ENCODE measurements at regions of chr14 and their contacts with region 1.

Region 1: DNA sequence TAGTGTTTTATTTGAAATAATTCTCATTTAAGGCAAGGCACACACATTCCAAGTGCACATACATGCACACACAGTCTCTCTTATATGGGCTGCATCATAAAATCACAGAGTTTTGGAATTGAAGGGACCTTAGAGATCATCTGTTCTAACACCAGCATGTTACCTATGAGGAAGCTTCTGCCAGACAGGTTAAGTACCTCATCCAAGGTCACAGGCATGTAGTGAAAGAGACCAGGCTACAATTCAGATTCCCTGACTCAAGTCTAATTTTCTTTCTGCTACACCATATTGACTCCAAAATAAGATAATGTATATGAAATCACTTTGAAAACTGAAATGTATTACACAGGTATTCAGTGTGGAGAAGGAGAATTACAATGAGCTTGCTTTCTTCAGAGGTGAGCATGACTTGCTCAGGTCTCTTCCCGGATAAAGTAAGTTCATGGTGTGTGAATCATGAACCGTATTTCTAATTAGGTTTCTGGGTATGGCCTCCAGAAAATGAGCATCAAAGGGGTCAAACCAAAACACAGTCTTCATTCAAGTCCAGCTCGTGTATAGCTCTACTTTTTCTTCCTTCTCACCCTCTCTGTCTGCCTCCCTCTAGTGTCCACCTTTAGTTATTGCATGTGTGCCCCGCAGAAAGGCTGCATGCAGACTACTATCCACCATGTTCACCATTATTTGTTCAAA is 411.9 kb downstream of the FUT8 start:
- DNase-seq: no peak
- H3K4me3 ChIP-seq: no peak overlapping the region
- H3K27ac ChIP-seq: no peak overlapping the region
- H3K4me1 ChIP-seq: peaks cover 0 to 15% (median 8%) of the 10 kb centered on the region in 4 experiments; a peak in 6 of 7 replicates
- H3K27me3 ChIP-seq: no peaks in the 10 kb centered on the region; a peak in 1 of 7 replicates
- CTCF ChIP-seq: peak; percentile 38 to 89 (median 74)
- EP300 ChIP-seq: no peak
- POLR2A ChIP-seq: no peak
- RAD21 ChIP-seq: peak; percentile 79 to 86

Region 2: DNA sequence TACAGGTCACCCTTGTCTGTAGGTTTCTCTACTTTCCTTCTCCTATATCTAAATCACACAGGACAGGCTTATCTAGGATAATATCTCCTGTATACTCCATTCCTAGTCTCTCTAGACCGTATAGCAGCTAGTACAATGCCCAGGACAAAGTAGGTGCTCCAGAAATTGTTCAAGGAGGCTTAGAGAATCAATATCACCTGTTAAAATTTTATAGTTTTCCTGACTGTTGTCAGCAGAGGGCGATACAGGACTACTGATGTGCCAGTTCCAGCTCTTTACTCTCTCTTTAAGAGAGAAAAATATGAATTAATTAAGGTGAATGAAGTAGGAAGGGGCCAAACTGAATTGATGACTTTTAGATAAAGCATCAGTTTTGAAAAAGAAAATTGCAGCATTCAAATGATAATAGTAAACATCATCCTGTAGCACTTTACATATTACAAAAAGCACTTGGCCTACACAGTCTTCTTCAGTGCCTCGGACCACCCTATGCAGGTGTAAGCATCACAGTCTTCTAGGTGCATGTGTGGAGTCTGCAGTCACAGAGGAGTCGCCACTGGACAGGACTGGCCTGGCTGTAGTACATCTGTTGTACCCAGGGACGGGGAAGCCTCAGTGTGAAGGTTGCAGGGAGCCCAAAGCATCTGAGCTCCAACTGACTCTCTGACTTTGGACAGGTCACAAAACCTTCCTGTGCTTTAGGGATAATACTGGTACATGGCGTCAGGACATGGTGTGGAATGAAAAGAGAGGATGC is 660.2 kb before region 1 on chr14:
- CTCF ChIA-PET with region 1: interaction called, 24 read pairs
- POLR2A ChIA-PET with region 1: no interaction called
- DNase-seq: no peak
- H3K4me3 ChIP-seq: no peak overlapping the region
- H3K27ac ChIP-seq: no peak overlapping the region
- H3K4me1 ChIP-seq: no peaks in the 10 kb centered on the region
- H3K27me3 ChIP-seq: no peaks in the 10 kb centered on the region
- CTCF ChIP-seq: peak in 2 of 3 experiments; percentile 47 to 52; a peak in 2 of 4 replicates
- EP300 ChIP-seq: no peak
- POLR2A ChIP-seq: no peak
- RAD21 ChIP-seq: peak; percentile 88

Region 3: GRCh38 chr14:65412032-65412846 is 412.2 kb before region 1 on chr14 and contains the start of gene FUT8:
- CTCF ChIA-PET with region 1: interaction called, 23 read pairs
- POLR2A ChIA-PET with region 1: interaction called, 4 read pairs
- DNase-seq: peak; percentile 93 to 96
- H3K4me3 ChIP-seq: peak within 1 kb of the TSS; percentile 71 to 85 (median 77)
- H3K27ac ChIP-seq: peak within 1 kb of the TSS; percentile 73
- H3K4me1 ChIP-seq: peaks cover 0 to 5% (median 0%) of the 10 kb centered on the region in 4 experiments; a peak in 1 of 7 replicates
- H3K27me3 ChIP-seq: no peaks in the 10 kb centered on the region; a peak in 1 of 7 replicates
- CTCF ChIP-seq: peak; percentile 64 to 78 (median 67)
- EP300 ChIP-seq: peak; percentile 5 to 73; a peak in 2 of 3 replicates
- POLR2A ChIP-seq: peak in 1 of 2 experiments; percentile 76; a peak in 2 of 3 replicates
- RAD21 ChIP-seq: peak; percentile 79 to 85
- total RNA-seq, gene FUT8: 25.1 and 25.3 TPM in 2 replicates

Region 4: GRCh38 chr14:65650826-65651225 is 173.6 kb before region 1 on chr14:
- CTCF ChIA-PET with region 1: no interaction called
- POLR2A ChIA-PET with region 1: no interaction called
- DNase-seq: no peak
- H3K4me3 ChIP-seq: no peak overlapping the region
- H3K27ac ChIP-seq: no peak overlapping the region
- H3K4me1 ChIP-seq: no peaks in the 10 kb centered on the region
- H3K27me3 ChIP-seq: no peaks in the 10 kb centered on the region
- CTCF ChIP-seq: no peak
- EP300 ChIP-seq: no peak
- POLR2A ChIP-seq: no peak
- RAD21 ChIP-seq: no peak

Region 5: DNA sequence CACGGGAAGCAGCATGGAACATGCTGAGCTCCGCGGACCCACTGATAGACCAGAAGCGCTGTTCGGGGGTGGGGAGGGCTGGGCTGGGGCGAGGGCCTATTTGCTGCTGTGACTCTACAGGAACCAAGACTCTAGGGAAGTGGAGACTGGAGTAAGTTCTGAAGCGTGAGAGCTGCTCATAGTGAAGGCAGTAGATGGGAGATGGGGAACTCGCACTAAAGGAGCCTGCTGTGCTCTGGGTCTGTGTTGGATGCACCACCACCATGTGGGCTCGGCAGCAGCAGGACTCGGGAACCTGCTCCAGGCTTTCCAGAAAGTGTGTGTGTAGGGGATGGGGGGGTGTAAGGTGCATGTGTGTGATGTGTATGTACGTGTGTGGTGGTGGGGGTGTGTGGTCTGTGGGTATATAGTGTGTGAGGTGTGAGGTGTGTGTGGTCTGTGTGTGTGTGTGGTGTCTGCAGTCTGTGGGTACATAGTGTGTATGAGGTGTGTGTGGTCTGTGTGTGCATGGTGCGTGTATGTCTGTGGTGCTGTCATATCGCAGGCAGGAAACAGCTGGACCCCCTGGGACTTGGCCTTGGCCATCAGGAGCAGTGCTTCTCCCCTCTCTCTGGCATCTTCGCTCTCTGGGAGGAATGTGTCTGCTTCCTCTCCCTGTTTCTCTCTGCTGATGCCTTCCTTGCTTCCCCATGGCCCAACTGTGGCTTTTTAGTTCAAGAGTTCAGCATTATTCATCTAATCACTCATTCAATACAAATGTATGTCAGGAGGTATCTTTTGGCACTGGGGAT is 33.0 kb before region 1 on chr14:
- CTCF ChIA-PET with region 1: interaction called, 11 read pairs
- POLR2A ChIA-PET with region 1: no interaction called
- DNase-seq: no peak
- H3K4me3 ChIP-seq: no peak overlapping the region
- H3K27ac ChIP-seq: no peak overlapping the region
- H3K4me1 ChIP-seq: peaks cover 0 to 3% (median 0%) of the 10 kb centered on the region in 4 experiments; a peak in 4 of 7 replicates
- H3K27me3 ChIP-seq: no peaks in the 10 kb centered on the region
- CTCF ChIP-seq: no peak
- EP300 ChIP-seq: no peak
- POLR2A ChIP-seq: no peak
- RAD21 ChIP-seq: no peak

Region 6: GRCh38 chr14:65804752-65805473 is 19.5 kb before region 1 on chr14:
- CTCF ChIA-PET with region 1: interaction called, 43 read pairs
- POLR2A ChIA-PET with region 1: interaction called, 3 read pairs
- DNase-seq: no peak
- H3K4me3 ChIP-seq: no peak overlapping the region
- H3K27ac ChIP-seq: no peak overlapping the region
- H3K4me1 ChIP-seq: no peaks in the 10 kb centered on the region
- H3K27me3 ChIP-seq: no peaks in the 10 kb centered on the region
- CTCF ChIP-seq: no peak
- EP300 ChIP-seq: no peak
- POLR2A ChIP-seq: no peak
- RAD21 ChIP-seq: no peak

Region 7: DNA sequence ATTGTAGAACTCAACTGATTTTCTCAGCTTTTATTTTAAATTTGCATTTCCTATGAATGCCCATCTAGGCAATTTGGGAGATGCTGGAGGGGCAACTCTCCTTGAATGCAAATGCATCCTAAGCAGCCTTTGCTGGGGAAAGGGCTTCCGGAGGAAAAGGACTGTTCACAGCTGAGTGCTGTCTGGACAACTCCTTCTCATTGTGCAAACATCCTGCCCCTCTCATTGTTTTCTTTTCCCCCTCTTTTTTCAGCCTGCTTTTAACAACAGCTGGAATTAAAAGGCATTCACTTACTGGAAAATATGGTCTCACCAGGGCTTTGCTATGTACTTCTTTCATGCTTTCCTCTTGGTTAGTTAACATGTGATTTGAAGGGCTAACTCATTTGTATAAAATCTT is 14.1 kb before region 1 on chr14:
- CTCF ChIA-PET with region 1: interaction called, 43 read pairs
- POLR2A ChIA-PET with region 1: interaction called, 4 read pairs
- DNase-seq: no peak
- H3K4me3 ChIP-seq: no peak overlapping the region
- H3K27ac ChIP-seq: no peak overlapping the region
- H3K4me1 ChIP-seq: peaks cover 0 to 5% (median 3%) of the 10 kb centered on the region in 4 experiments; a peak in 3 of 7 replicates
- H3K27me3 ChIP-seq: no peaks in the 10 kb centered on the region
- CTCF ChIP-seq: no peak
- EP300 ChIP-seq: no peak
- POLR2A ChIP-seq: no peak
- RAD21 ChIP-seq: no peak

Region 8: DNA sequence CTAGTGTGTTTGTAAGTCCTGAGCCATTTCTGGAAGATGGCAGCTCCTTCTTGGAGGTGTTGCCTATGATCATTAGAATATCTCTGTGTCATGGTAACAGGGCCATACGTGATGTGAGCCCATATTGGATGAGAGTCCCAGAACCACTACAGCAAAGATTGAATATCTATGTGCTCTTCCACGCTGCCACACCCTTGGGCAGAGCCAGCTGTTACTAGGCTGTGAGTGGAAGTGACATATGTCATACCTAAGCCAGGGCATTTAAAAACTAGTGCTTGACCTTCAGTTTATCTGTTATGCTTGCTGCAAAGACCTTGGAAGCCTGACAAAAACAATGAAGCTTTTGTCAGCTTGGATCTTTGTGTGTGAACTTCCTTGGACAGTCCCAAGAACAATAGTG is 166.7 kb after region 1 on chr14:
- CTCF ChIA-PET with region 1: no interaction called
- POLR2A ChIA-PET with region 1: no interaction called
- DNase-seq: no peak
- H3K4me3 ChIP-seq: no peak overlapping the region
- H3K27ac ChIP-seq: no peak overlapping the region
- H3K4me1 ChIP-seq: peaks cover 0 to 11% (median 5%) of the 10 kb centered on the region in 4 experiments; a peak in 3 of 7 replicates
- H3K27me3 ChIP-seq: no peaks in the 10 kb centered on the region
- CTCF ChIP-seq: no peak
- EP300 ChIP-seq: no peak
- POLR2A ChIP-seq: no peak
- RAD21 ChIP-seq: no peak

Measured in H1 (cell line).